ENCODE measurements at regions of chr16 and their contacts with region 1.

Region 1: GRCh38 chr16:83826146-83826913 is 18.6 kb downstream of the HSBP1 start:
- DNase-seq: peak; percentile 65 to 75 (median 67)
- H3K4me3 ChIP-seq: no peak overlapping the region
- H3K4me3 Mint-ChIP-seq: peak overlapping the region in 2 of 8 donors; percentile 7 to 8
- H3K27ac ChIP-seq: no peak overlapping the region
- H3K27ac Mint-ChIP-seq: peak overlapping the region in 1 of 7 donors; percentile 39
- H3K4me1 ChIP-seq: no peaks in the 10 kb centered on the region
- H3K4me1 Mint-ChIP-seq: peaks cover 0 to 6% (median 3%) of the 10 kb centered on the region in 4 donors
- H3K27me3 ChIP-seq: no peaks in the 10 kb centered on the region
- H3K27me3 Mint-ChIP-seq: peaks cover 3 to 10% of the 10 kb centered on the region in 2 donors

Region 2: DNA sequence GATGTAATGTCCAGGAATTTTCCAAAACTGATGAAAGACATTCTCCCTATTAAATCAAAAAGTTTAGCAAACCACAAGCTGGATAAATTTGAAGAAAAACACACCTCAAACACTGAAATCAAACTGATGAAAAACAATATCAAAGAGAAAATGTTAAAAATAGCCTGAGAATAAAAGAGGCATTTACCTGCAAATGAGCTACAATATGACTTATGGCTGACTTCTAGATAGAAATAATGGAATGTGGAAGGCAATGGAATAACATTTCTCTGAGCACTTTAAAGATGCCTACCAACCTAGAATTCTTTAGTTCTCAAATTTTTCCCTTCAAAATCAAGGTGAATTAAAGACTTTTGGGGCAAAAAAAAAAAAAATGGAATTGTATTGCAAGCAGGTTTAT is 70.9 kb before region 1 on chr16:
- CTCF ChIA-PET with region 1: no interaction called
- POLR2A ChIA-PET with region 1: no interaction called
- intact Hi-C with region 1: no loop called
- DNase-seq: no peak
- H3K4me3 ChIP-seq: no peak overlapping the region
- H3K4me3 Mint-ChIP-seq: no peak overlapping the region
- H3K27ac ChIP-seq: no peak overlapping the region
- H3K27ac Mint-ChIP-seq: no peak overlapping the region
- H3K4me1 ChIP-seq: no peaks in the 10 kb centered on the region
- H3K4me1 Mint-ChIP-seq: no peaks in the 10 kb centered on the region
- H3K27me3 ChIP-seq: no peaks in the 10 kb centered on the region
- H3K27me3 Mint-ChIP-seq: peaks cover 10% of the 10 kb centered on the region in 2 donors

Region 3: GRCh38 chr16:83813823-83814658 is 12.3 kb before region 1 on chr16:
- CTCF ChIA-PET with region 1: interaction called, 13 read pairs
- POLR2A ChIA-PET with region 1: no interaction called
- intact Hi-C with region 1: no loop called
- DNase-seq: no peak
- H3K4me3 ChIP-seq: no peak overlapping the region
- H3K4me3 Mint-ChIP-seq: no peak overlapping the region
- H3K27ac ChIP-seq: no peak overlapping the region
- H3K27ac Mint-ChIP-seq: peak overlapping the region in 1 of 7 donors; percentile 42
- H3K4me1 ChIP-seq: peaks cover 28% of the 10 kb centered on the region
- H3K4me1 Mint-ChIP-seq: peaks cover 6 to 26% (median 16%) of the 10 kb centered on the region in 4 donors
- H3K27me3 ChIP-seq: no peaks in the 10 kb centered on the region
- H3K27me3 Mint-ChIP-seq: no peaks in the 10 kb centered on the region

Region 4: GRCh38 chr16:83878838-83879237 is 52.5 kb after region 1 on chr16:
- CTCF ChIA-PET with region 1: no interaction called
- POLR2A ChIA-PET with region 1: no interaction called
- intact Hi-C with region 1: loop called (anchors 1 kb)
- DNase-seq: no peak
- H3K4me3 ChIP-seq: no peak overlapping the region
- H3K4me3 Mint-ChIP-seq: no peak overlapping the region
- H3K27ac ChIP-seq: no peak overlapping the region
- H3K27ac Mint-ChIP-seq: no peak overlapping the region
- H3K4me1 ChIP-seq: no peaks in the 10 kb centered on the region
- H3K4me1 Mint-ChIP-seq: no peaks in the 10 kb centered on the region
- H3K27me3 ChIP-seq: peaks cover 4% of the 10 kb centered on the region
- H3K27me3 Mint-ChIP-seq: peaks cover 16 to 21% of the 10 kb centered on the region in 2 donors

Region 5: GRCh38 chr16:83898463-83899271 is 72.3 kb after region 1 on chr16 and contains the start of gene MLYCD:
- CTCF ChIA-PET with region 1: no interaction called
- POLR2A ChIA-PET with region 1: interaction called, 3 read pairs
- intact Hi-C with region 1: loop called (anchors 5 kb)
- DNase-seq: peak; percentile 67 to 77 (median 70)
- H3K4me3 ChIP-seq: peak within 1 kb of the TSS; percentile 67 to 73
- H3K4me3 Mint-ChIP-seq: peak within 1 kb of the TSS; percentile 90 to 98 (median 92)
- H3K27ac ChIP-seq: peak within 1 kb of the TSS; percentile 53
- H3K27ac Mint-ChIP-seq: peak within 1 kb of the TSS; percentile 51 to 97 (median 90)
- H3K4me1 ChIP-seq: peaks cover 22% of the 10 kb centered on the region
- H3K4me1 Mint-ChIP-seq: peaks cover 23 to 45% (median 31%) of the 10 kb centered on the region in 4 donors
- H3K27me3 ChIP-seq: no peaks in the 10 kb centered on the region
- H3K27me3 Mint-ChIP-seq: peaks cover 2% of the 10 kb centered on the region in 2 donors
- total RNA-seq, gene MLYCD: 9.7 to 11.1 TPM

Region 6: DNA sequence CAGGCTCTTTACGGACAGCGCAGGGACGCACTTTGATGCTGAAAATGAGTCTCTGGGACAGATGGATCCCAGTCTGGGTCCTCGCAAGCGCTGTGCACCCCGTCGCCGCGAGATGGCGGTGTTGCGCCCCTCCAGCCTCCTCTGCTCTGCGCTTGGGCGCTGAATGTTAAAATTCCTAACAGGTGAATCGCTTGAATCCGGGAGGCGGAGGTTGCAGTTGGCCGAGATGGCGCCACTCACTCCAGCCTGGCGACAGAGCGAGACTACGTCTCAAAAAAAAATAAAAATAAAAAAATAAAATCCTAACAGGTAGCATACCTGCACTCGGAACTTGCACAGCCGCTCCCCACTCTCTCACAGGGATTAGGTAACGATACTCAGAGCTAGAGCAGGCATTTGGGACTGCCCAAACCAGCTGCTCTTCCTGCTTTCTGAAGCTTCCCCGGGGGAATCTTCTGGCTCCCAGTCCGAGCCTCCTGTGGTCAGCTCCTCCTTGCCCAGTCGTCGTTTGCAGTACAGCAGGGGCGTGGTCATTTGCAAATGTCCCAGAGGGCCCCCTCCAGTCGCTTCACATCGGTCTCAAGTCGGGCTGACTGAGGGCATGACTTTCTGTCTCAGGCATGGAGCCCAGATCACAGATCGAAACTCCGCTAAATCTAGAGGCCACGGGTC is 100.5 kb after region 1 on chr16:
- CTCF ChIA-PET with region 1: interaction called, 3 read pairs
- POLR2A ChIA-PET with region 1: no interaction called
- intact Hi-C with region 1: loop called (anchors 1 kb)
- DNase-seq: peak in 4 of 5 donors; percentile 27 to 41 (median 34)
- H3K4me3 ChIP-seq: no peak overlapping the region
- H3K4me3 Mint-ChIP-seq: no peak overlapping the region
- H3K27ac ChIP-seq: no peak overlapping the region
- H3K27ac Mint-ChIP-seq: peak overlapping the region in 1 of 7 donors; percentile 76
- H3K4me1 ChIP-seq: no peaks in the 10 kb centered on the region
- H3K4me1 Mint-ChIP-seq: peaks cover 2 to 4% (median 4%) of the 10 kb centered on the region in 4 donors
- H3K27me3 ChIP-seq: no peaks in the 10 kb centered on the region
- H3K27me3 Mint-ChIP-seq: no peaks in the 10 kb centered on the region

Region 7: GRCh38 chr16:83956336-83957289 is 130.3 kb after region 1 on chr16:
- CTCF ChIA-PET with region 1: no interaction called
- POLR2A ChIA-PET with region 1: no interaction called
- intact Hi-C with region 1: loop called (anchors 1 kb)
- DNase-seq: peak; percentile 46 to 61 (median 57)
- H3K4me3 ChIP-seq: no peak overlapping the region
- H3K4me3 Mint-ChIP-seq: no peak overlapping the region
- H3K27ac ChIP-seq: no peak overlapping the region
- H3K27ac Mint-ChIP-seq: no peak overlapping the region
- H3K4me1 ChIP-seq: peaks cover 10% of the 10 kb centered on the region
- H3K4me1 Mint-ChIP-seq: peaks cover 0 to 8% (median 4%) of the 10 kb centered on the region in 4 donors
- H3K27me3 ChIP-seq: no peaks in the 10 kb centered on the region
- H3K27me3 Mint-ChIP-seq: peaks cover 10 to 15% of the 10 kb centered on the region in 2 donors

Region 8: DNA sequence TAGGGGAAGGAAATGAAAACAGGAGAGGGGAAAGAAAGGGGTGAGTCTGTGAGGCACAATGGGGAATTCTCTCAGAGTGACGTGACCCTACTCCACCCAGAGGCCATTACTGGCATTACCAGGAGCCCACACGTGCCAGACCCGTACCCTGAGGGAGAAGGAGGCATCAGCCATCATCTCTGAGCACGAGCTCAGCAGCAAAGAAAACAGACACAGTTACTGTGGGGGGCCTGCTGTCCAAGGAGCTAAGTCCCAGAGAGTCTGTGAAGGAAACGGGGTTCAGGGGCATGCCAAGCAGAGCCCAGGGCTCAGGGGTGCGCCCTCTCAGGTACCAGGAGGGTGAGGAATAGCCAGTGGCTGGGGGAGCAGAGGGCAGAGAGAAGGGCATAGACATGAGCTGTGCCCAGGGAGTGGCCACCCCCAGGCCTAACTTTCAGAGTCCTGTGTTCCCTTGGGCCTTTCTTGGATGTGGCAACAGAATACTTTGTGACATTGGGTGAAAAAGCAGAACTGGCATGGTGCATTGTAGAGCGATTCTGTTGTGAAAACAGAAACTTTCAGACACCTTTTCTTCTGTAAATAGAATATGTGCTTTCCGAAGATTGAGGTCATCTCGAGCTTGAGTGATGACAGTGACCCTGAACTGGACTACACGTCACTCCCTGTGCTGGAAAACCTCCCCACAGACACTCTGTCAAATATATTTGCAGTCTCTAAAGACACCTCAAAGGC is 349.2 kb after region 1 on chr16:
- CTCF ChIA-PET with region 1: interaction called, 3 read pairs
- POLR2A ChIA-PET with region 1: no interaction called
- intact Hi-C with region 1: loop called (anchors 1 kb)
- DNase-seq: peak; percentile 35 to 59 (median 45)
- H3K4me3 ChIP-seq: no peak overlapping the region
- H3K4me3 Mint-ChIP-seq: no peak overlapping the region
- H3K27ac ChIP-seq: no peak overlapping the region
- H3K27ac Mint-ChIP-seq: peak overlapping the region in 2 of 7 donors; percentile 9 to 59
- H3K4me1 ChIP-seq: no peaks in the 10 kb centered on the region
- H3K4me1 Mint-ChIP-seq: peaks cover 0 to 6% (median 5%) of the 10 kb centered on the region in 4 donors
- H3K27me3 ChIP-seq: no peaks in the 10 kb centered on the region
- H3K27me3 Mint-ChIP-seq: peaks cover 0 to 2% of the 10 kb centered on the region in 2 donors